ENCODE measurements at regions of chr10 and their contacts with region 1.

Region 1: DNA sequence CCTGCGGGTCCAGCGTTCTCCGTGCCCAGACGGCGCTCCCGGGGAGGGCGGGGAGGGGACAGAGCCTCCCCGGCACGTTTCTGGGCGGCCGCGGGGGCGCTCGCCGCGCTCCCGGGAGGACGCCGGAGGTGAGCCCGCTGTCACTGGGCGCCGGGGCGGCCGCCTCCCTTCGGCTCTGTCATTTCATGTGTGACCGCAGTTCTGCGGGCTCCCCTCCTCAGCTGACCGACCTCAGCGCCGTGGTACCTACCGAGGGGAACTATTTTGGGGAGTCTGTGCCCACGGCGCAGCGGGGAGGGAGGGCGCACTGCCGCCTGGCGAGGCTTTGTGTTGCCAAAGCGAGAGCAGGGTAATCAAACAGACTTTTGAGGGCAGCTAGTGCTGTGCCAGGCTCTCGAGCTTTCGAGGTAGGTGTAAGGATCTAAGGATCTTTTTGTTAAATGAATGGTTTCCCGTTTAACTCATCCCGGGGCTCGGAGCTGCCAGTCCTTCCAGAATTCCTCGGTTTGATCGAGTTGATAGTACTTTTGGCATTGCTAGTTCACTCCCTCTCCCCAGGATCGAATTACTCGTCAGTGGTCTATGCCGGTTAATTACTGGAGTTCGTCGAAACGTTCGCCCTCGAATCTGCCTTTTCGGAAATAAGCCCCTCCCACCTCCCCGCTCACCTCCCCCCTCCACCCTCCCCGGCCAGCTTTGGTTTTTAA is 1.9 kb downstream of the ARID5B start:
- DNase-seq: peak; percentile 74
- H3K4me3 Mint-ChIP-seq: peak overlapping the region; percentile 99
- H3K27ac Mint-ChIP-seq: peak overlapping the region; percentile 100
- H3K4me1 Mint-ChIP-seq: peaks cover 42% of the 10 kb centered on the region
- H3K27me3 Mint-ChIP-seq: no peaks in the 10 kb centered on the region

Region 2: GRCh38 chr10:61140765-61141392 is 762.5 kb before region 1 on chr10:
- CTCF ChIA-PET with region 1: no interaction called
- intact Hi-C with region 1: no loop called
- DNase-seq: no peak
- H3K4me3 Mint-ChIP-seq: no peak overlapping the region
- H3K27ac Mint-ChIP-seq: no peak overlapping the region
- H3K4me1 Mint-ChIP-seq: no peaks in the 10 kb centered on the region
- H3K27me3 Mint-ChIP-seq: peaks cover 3% of the 10 kb centered on the region

Region 3: DNA sequence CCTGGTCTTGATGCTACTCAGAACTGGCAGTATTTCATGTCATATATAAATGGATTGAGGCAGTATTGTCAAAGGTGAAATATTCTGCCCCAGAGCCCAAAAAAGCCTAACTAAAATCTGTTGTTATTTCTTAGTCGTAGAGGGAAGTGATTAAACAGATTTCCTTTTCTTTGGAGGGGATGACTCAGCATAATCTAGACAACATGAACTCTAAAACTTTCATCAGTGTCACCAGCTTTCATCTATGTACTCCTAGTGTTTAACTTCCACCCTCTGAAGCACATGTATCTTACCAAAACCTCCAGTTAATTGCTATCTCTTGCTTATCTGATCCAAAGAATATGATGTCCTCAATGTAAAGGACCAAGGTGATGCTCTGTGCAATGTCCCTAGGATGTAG is 99.0 kb before region 1 on chr10:
- CTCF ChIA-PET with region 1: no interaction called
- intact Hi-C with region 1: no loop called
- DNase-seq: no peak
- H3K4me3 Mint-ChIP-seq: no peak overlapping the region
- H3K27ac Mint-ChIP-seq: no peak overlapping the region
- H3K4me1 Mint-ChIP-seq: peaks cover 5% of the 10 kb centered on the region
- H3K27me3 Mint-ChIP-seq: no peaks in the 10 kb centered on the region

Region 4: GRCh38 chr10:61937631-61938351 is 34.4 kb after region 1 on chr10:
- CTCF ChIA-PET with region 1: interaction called, 33 read pairs
- intact Hi-C with region 1: no loop called
- DNase-seq: no peak
- H3K4me3 Mint-ChIP-seq: peak overlapping the region; percentile 40
- H3K27ac Mint-ChIP-seq: peak overlapping the region; percentile 93
- H3K4me1 Mint-ChIP-seq: peaks cover 92% of the 10 kb centered on the region
- H3K27me3 Mint-ChIP-seq: no peaks in the 10 kb centered on the region

Region 5: DNA sequence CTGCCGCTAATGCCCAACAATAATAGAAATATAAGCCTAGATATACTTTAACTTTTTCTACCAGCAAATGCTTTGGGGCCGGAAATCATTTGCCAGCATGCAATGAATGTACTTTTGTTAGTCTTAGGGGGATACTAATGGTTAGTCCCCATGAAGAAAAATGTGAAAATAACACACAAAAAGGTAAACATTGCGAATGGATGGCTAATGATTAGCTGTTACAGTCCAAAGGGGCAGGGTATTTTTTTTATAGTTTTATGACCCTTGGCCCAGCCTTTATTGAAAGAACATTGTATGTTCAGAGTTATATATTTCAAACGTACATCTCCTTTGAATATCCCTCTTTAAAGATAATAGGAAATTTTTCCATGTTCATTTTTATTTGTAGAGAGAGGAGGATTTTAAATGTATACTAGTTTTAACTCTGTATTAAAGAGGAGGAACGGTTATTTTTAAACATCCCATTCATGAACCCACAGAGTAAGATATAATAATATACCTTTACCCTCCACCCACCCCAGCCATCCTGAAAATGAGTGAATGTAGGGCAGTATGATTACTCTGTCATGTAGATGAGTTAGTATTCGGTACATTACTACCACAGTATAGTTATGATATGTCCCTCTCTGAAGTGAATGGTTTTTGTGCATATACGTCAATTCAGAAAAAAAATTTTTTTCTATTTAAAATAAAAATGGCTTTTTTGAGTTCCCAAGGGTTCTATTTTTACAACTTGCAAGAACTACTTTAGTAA is 61.8 kb after region 1 on chr10:
- CTCF ChIA-PET with region 1: interaction called, 3 read pairs
- intact Hi-C with region 1: loop called (anchors 1 kb)
- DNase-seq: no peak
- H3K4me3 Mint-ChIP-seq: no peak overlapping the region
- H3K27ac Mint-ChIP-seq: peak overlapping the region; percentile 87
- H3K4me1 Mint-ChIP-seq: peaks cover 90% of the 10 kb centered on the region
- H3K27me3 Mint-ChIP-seq: no peaks in the 10 kb centered on the region

Region 6: DNA sequence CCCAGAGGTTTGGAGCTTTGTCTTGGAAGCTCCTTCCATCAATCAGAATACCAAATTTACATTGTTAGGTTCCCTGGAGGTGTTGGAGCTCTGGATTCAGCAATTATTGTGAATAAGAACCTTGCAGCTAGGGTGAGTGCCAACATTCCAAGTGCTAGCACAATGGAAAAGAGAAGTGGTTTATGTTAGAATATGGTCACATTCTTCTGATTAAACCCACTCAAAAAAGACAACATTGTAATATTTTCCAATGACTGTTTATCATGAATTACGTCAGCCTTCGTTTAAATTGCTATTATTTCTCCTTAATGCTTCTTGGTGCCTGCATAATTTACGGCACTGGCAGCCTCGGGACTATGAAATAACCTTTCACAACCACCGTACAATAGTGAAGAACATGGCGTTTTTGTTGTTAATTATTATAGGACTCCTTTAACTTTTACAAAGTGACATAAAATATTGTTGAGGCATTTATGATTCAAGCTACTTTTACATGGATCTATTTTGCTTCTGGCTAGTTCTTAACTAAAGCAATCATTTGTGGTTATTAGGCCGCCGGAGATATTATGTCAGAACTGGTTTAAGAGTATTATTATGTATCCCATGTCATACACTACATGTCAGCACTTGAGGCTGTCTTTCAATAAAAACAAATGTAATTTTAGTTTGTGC is 115.8 kb after region 1 on chr10:
- CTCF ChIA-PET with region 1: interaction called, 5 read pairs
- intact Hi-C with region 1: loop called (anchors 1 kb)
- DNase-seq: no peak
- H3K4me3 Mint-ChIP-seq: peak overlapping the region; percentile 39
- H3K27ac Mint-ChIP-seq: peak overlapping the region; percentile 99
- H3K4me1 Mint-ChIP-seq: peaks cover 90% of the 10 kb centered on the region
- H3K27me3 Mint-ChIP-seq: no peaks in the 10 kb centered on the region

Region 7: GRCh38 chr10:62238880-62239279 is 335.5 kb after region 1 on chr10:
- CTCF ChIA-PET with region 1: interaction called, 10 read pairs
- intact Hi-C with region 1: no loop called
- DNase-seq: no peak
- H3K4me3 Mint-ChIP-seq: no peak overlapping the region
- H3K27ac Mint-ChIP-seq: peak overlapping the region; percentile 41
- H3K4me1 Mint-ChIP-seq: peaks cover 41% of the 10 kb centered on the region
- H3K27me3 Mint-ChIP-seq: no peaks in the 10 kb centered on the region

Measured in activated naive CD4-positive, alpha-beta T cell treated with anti-CD3 and anti-CD28 coated beads for 36 hours (primary cell).